Transverse colon (tissue), 4 donors: ENCODE measurements at regions of chr1 and their contacts with region 1.

Region 1: DNA sequence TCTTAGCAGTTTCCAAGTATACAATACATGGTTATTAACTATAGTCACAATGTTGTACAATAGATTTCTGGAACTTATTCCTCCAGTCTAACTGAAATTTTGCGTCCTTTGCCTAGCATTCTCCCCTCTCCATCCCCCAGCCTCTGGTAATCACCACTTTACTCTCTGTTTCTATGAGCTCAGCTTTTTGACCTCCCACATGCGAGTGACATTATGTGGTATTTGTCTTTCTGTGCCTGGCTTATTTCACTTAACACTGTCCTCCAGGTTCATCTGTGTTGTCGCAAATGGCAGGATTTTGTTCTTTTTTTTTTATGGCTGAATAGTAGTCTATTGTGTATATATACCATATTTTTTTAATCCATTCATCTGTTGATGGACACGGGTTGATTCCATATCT is 43.9 kb upstream of the CD101 start:
- DNase-seq: no peak
- H3K4me3 ChIP-seq: no peak overlapping the region
- H3K27ac ChIP-seq: no peak overlapping the region
- H3K4me1 ChIP-seq: peaks cover 0 to 6% (median 2%) of the 10 kb centered on the region in 4 donors
- H3K27me3 ChIP-seq: no peaks in the 10 kb centered on the region
- CTCF ChIP-seq: no peak
- EP300 ChIP-seq: no peak
- POLR2A ChIP-seq: no peak

Region 2: DNA sequence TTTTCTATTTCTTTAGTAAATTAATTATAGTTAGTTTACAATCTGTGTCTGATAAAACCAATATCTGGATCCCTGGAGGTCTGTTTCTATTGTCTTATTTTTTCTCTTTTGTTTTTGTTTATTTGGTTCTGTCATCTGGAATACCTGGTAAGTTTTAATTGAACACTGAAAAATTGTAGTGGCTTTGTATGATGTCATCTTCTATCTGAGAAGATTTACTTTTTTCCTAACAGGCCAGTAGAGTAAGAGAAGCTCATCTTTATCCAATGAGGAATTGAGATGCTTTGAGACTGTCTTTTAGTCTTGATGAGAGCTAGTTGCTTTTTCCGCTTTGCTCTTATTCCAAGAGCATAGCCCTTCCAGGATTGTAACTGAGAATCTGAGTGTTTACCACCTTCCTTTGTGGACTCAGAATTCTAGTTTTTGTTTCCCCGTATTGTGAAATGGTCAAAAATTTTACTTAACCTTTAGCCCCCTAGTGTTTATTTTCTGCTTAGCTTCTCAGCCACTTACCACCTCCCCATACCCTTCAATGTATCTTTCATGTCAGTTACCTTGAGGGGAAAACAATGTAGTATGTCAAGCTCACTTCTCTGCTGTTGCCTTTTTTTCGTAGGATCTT is 22.9 kb before region 1 on chr1:
- in situ Hi-C with region 1: no loop called
- intact Hi-C with region 1: loop called (anchors 2 kb)
- DNase-seq: no peak
- H3K4me3 ChIP-seq: no peak overlapping the region
- H3K27ac ChIP-seq: no peak overlapping the region
- H3K4me1 ChIP-seq: peaks cover 0 to 36% (median 7%) of the 10 kb centered on the region in 4 donors
- H3K27me3 ChIP-seq: no peaks in the 10 kb centered on the region
- CTCF ChIP-seq: peak in 4 of 5 experiments; percentile 12 to 29 (median 15)
- EP300 ChIP-seq: no peak
- POLR2A ChIP-seq: no peak

Region 3: DNA sequence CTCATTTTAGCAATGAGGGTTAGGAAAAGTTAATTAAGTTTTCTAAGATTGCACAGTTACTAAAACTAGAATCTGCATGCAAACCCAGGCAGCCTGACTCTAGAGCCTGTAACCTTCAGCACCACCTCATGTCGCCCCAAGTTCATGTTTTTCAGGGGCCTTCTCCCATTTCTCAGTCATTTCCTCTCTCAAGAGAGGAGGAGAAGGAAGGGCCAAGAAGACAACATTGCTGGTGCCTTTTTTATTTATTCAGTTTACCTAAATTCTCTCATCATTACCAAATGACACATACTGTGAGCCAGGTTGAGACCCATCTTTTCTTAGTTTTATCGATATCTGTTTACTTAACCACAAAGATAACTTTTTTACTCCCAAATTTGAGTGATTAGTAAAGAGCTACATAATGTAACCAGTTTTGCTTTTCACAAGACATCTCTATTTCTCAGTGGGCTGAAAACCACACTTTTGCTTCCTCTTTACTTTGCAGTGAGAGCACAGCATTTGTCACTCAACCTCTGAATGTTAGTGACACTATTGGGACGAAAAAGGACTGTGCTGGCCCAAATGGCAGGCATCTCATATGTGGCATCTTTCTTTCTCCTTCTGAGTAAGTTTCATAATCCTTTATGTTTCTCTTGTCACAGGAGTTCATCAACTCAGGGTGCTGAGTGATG is 43.7 kb after region 1 on chr1 and contains the start of gene CD101:
- in situ Hi-C with region 1: no loop called
- intact Hi-C with region 1: no loop called
- DNase-seq: no peak
- H3K4me3 ChIP-seq: no peak within 1 kb of the TSS
- H3K27ac ChIP-seq: peak within 1 kb of the TSS in 3 of 4 donors; percentile 19 to 52 (median 27)
- H3K4me1 ChIP-seq: peaks cover 0 to 3% (median 0%) of the 10 kb centered on the region in 4 donors
- H3K27me3 ChIP-seq: no peaks in the 10 kb centered on the region
- CTCF ChIP-seq: no peak
- EP300 ChIP-seq: no peak
- POLR2A ChIP-seq: no peak
- total RNA-seq, gene CD101: 0.40 to 24.3 (median 4.0) TPM